ENCODE measurements at regions of chr16 and their contacts with region 1.

Region 1: DNA sequence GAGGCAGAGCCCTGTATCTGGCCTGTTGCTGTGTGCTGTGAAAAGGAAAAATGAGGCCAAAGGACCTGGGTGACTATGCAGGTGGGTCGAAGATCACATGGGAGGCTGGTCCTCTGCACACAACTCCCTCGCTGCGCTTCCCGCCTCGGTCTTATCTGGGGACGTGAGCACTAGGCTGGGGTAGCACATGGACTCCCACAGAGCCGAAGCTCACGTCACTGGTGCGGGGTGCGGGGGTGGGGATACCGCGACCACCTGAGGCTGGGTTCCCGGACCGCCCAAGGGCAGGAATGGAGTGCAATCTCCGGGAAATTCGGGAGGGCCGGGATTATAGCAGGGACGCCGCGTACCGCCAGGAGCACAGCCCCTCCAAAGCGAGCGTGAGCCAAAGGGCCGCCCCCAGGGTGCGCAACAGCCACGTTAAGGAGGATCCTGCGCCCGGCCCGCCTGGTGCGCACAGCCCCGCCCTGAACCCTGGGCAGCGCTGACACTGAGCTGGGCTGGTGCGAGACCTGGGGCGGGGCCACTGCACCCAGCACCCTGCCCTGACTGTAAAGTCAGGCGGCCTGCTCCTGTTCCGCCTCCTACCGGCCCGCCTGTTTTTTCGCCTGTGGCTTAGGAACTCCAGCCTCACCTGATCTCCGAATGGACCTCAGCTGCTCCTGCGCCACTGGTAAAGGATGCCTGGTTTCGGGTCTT is 4.8 kb downstream of the MT1A start:
- DNase-seq: peak; percentile 66 to 87 (median 74)
- H3K4me3 ChIP-seq: peak overlapping the region; percentile 40
- H3K4me3 Mint-ChIP-seq: peak overlapping the region; percentile 75 to 89 (median 81)
- H3K27ac ChIP-seq: no peak overlapping the region
- H3K27ac Mint-ChIP-seq: peak overlapping the region in 7 of 8 donors; percentile 46 to 92 (median 85)
- H3K4me1 ChIP-seq: peaks cover 16% of the 10 kb centered on the region
- H3K4me1 Mint-ChIP-seq: peaks cover 20 to 32% (median 26%) of the 10 kb centered on the region in 3 donors
- H3K27me3 ChIP-seq: peaks cover 17% of the 10 kb centered on the region
- H3K27me3 Mint-ChIP-seq: peaks cover 22 to 30% of the 10 kb centered on the region in 2 donors

Region 2: DNA sequence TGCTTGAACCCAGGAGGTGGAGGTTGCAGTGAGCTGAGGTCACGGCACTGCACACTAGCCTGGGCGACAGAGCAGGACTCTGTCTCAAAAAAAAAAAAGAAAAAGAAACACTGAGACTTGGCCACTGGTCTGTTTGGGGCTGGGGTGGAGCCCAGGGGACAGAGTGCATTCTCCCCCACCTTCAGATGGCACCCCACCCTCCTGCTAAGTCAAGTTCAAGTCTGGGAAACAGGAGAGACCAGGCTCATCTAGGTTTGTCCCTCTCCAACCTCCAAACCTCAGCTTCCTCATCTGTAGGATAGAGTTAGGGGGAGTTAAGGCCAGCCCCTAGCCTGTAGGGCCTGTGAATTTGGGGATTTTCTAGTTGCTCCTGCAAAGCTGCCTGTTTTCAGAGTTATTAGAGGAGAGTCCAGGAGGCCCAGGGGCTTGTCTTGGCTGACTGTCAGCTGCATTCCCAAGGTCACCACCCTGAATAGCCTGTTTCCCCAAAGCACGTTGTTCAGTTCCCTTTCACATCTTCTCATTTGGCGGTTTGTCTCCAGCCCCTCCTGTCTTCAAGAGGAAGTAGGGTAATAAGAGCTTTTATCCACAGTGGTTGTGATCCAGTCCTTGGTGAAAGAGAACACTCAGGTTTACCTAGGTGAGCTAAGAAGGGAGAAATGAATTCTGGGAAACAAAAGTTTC is 51.7 kb before region 1 on chr16:
- CTCF ChIA-PET with region 1: no interaction called
- POLR2A ChIA-PET with region 1: no interaction called
- DNase-seq: no peak
- H3K4me3 ChIP-seq: no peak overlapping the region
- H3K4me3 Mint-ChIP-seq: no peak overlapping the region
- H3K27ac ChIP-seq: no peak overlapping the region
- H3K27ac Mint-ChIP-seq: no peak overlapping the region
- H3K4me1 ChIP-seq: peaks cover 3% of the 10 kb centered on the region
- H3K4me1 Mint-ChIP-seq: peaks cover 8 to 17% (median 9%) of the 10 kb centered on the region in 3 donors
- H3K27me3 ChIP-seq: peaks cover 20% of the 10 kb centered on the region
- H3K27me3 Mint-ChIP-seq: peaks cover 32 to 46% of the 10 kb centered on the region in 2 donors

Region 3: DNA sequence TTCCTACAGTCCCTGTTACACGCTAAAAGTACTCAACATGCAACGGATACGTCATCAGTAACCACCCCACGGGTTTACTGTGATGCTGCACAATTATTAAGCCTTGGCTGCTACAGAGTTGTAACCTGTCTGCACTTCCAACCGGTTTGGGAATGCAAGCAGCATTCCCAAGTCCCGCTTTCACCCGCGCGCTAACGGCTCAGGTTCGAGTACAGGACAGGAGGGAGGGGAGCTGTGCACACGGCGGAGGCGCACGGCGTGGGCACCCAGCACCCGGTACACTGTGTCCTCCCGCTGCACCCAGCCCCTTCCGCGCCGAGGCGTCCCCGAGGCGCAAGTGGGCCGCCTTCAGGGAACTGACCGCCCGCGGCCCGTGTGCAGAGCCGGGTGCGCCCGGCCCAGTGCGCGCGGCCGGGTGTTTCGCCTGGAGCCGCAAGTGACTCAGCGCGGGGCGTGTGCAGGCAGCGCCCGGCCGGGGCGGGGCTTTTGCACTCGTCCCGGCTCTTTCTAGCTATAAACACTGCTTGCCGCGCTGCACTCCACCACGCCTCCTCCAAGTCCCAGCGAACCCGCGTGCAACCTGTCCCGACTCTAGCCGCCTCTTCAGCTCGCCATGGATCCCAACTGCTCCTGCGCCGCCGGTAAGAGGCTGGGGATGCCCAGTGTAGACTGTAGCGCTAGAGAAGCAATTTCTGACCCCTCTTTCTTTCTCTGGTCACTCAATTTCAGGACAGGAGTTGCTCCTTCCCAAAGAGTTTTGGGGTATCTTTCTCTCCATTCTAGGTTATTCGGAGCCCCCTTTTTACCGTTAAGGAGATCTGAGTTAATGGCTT is 35.0 kb before region 1 on chr16 and contains the start of gene MT2A:
- CTCF ChIA-PET with region 1: interaction called, 18 read pairs
- POLR2A ChIA-PET with region 1: interaction called, 5 read pairs
- DNase-seq: peak; percentile 78 to 92 (median 83)
- H3K4me3 ChIP-seq: peak within 1 kb of the TSS; percentile 98
- H3K4me3 Mint-ChIP-seq: peak within 1 kb of the TSS; percentile 89 to 99 (median 95)
- H3K27ac ChIP-seq: peak within 1 kb of the TSS; percentile 64
- H3K27ac Mint-ChIP-seq: peak within 1 kb of the TSS; percentile 82 to 98 (median 96)
- H3K4me1 ChIP-seq: peaks cover 39% of the 10 kb centered on the region
- H3K4me1 Mint-ChIP-seq: peaks cover 46 to 51% (median 48%) of the 10 kb centered on the region in 3 donors
- H3K27me3 ChIP-seq: no peaks in the 10 kb centered on the region
- H3K27me3 Mint-ChIP-seq: peaks cover 0 to 2% of the 10 kb centered on the region in 2 donors
- total RNA-seq, gene MT2A: 285 to 349 TPM

Region 4: DNA sequence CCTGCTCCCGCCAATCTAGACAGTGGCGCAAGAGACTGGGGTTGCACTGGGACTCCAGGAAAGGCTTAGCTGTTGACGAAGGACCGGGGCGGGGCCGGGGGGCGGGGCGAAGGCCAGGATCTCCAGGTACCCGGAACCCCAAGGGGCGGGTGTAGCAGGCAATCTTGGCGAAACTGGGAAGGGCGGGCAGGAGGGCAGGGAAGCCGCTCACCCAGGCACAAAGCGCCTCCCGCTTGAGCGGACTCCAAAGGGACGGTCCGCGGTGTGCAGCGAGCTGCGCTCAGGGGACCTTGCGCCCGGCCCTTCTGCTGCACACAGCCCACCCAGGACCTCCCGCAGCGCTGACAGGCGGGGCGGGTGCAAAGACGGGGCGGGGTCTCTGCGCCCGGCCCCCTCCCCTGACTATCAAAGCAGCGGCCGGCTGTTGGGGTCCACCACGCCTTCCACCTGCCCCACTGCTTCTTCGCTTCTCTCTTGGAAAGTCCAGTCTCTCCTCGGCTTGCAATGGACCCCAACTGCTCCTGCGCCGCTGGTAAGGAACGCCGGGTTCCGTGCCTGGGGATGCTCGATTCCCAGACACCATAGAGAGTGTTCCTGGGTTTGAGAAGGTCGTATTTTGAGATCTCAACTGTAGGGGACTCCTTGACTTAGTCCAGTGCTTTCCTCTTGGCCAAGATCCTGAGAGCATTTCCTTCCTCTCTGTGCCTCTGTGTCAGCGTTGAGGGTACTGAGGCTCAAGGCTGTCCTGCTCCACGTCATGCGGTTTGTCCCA is 14.5 kb after region 1 on chr16 and contains the start of gene MT1F:
- CTCF ChIA-PET with region 1: interaction called, 10 read pairs
- POLR2A ChIA-PET with region 1: interaction called, 5 read pairs
- DNase-seq: peak; percentile 55 to 84 (median 68)
- H3K4me3 ChIP-seq: peak within 1 kb of the TSS; percentile 80
- H3K4me3 Mint-ChIP-seq: peak within 1 kb of the TSS; percentile 92 to 98 (median 95)
- H3K27ac ChIP-seq: peak within 1 kb of the TSS; percentile 51
- H3K27ac Mint-ChIP-seq: peak within 1 kb of the TSS; percentile 51 to 99 (median 94)
- H3K4me1 ChIP-seq: peaks cover 21% of the 10 kb centered on the region
- H3K4me1 Mint-ChIP-seq: peaks cover 24 to 48% (median 43%) of the 10 kb centered on the region in 3 donors
- H3K27me3 ChIP-seq: no peaks in the 10 kb centered on the region
- H3K27me3 Mint-ChIP-seq: peaks cover 1 to 10% of the 10 kb centered on the region in 2 donors
- total RNA-seq, gene MT1F: 17.9 to 18.6 TPM

Region 5: GRCh38 chr16:56749672-56750491 is 106.7 kb after region 1 on chr16:
- CTCF ChIA-PET with region 1: no interaction called
- POLR2A ChIA-PET with region 1: no interaction called
- DNase-seq: no peak
- H3K4me3 ChIP-seq: no peak overlapping the region
- H3K4me3 Mint-ChIP-seq: no peak overlapping the region
- H3K27ac ChIP-seq: no peak overlapping the region
- H3K27ac Mint-ChIP-seq: peak overlapping the region in 2 of 8 donors; percentile 10 to 27
- H3K4me1 ChIP-seq: no peaks in the 10 kb centered on the region
- H3K4me1 Mint-ChIP-seq: peaks cover 14 to 31% (median 29%) of the 10 kb centered on the region in 3 donors
- H3K27me3 ChIP-seq: no peaks in the 10 kb centered on the region
- H3K27me3 Mint-ChIP-seq: no peaks in the 10 kb centered on the region